Activated CD8-positive, alpha-beta T cell treated with anti-CD3 and anti-CD28 coated beads for 36 hours (primary cell): ENCODE measurements at regions of chr15 and their contacts with region 1.

Region 1: DNA sequence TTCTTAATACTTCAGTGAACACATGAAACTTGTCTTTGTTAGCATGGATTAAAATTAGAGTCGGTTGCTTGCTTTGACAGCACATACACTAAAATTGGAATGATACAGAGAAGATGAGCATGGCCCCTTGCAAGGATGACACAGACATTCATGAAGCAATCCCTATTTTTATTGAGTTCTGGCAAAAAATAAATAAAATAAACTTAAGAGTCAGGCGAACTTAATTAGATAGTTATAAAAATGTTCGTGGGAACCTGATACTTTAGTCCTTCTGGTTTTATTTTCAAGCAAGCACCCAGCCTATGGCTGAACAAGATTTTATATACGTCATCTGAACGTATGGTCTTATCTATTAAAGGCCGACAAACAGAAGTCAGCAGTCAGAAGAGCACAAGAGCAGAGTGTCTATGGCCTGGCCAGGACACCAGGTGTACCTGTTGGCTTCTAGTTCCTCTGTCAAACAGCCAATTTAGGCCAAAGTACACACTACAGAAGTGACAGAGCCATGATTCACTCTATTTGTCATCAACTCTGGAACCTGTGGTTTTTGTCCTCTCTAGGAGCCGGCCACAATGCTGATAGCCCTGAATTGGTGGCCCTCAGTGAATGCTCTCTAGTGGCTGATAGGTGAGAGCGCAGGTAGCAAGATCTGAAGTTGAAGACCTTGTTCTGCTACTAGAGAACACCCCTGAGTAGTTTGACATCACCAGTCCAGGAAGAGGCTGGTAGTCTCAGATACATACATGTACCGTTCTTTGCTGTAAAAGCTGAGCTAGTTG is 64.3 kb downstream of the LEO1 start:
- DNase-seq: peak; percentile 14
- ATAC-seq: peak; percentile 60
- H3K4me3 Mint-ChIP-seq: no peak overlapping the region
- H3K27ac Mint-ChIP-seq: no peak overlapping the region
- H3K4me1 Mint-ChIP-seq: no peaks in the 10 kb centered on the region
- H3K27me3 Mint-ChIP-seq: no peaks in the 10 kb centered on the region
- CTCF ChIP-seq: no peak

Region 2: GRCh38 chr15:51888593-51889195 is 18.6 kb before region 1 on chr15:
- CTCF ChIA-PET with region 1: interaction called, 34 read pairs
- POLR2A ChIA-PET with region 1: no interaction called
- intact Hi-C with region 1: no loop called
- DNase-seq: no peak
- ATAC-seq: no peak
- H3K4me3 Mint-ChIP-seq: no peak overlapping the region
- H3K27ac Mint-ChIP-seq: no peak overlapping the region
- H3K4me1 Mint-ChIP-seq: peaks cover 10% of the 10 kb centered on the region
- H3K27me3 Mint-ChIP-seq: no peaks in the 10 kb centered on the region
- CTCF ChIP-seq: peak; percentile 92

Region 3: DNA sequence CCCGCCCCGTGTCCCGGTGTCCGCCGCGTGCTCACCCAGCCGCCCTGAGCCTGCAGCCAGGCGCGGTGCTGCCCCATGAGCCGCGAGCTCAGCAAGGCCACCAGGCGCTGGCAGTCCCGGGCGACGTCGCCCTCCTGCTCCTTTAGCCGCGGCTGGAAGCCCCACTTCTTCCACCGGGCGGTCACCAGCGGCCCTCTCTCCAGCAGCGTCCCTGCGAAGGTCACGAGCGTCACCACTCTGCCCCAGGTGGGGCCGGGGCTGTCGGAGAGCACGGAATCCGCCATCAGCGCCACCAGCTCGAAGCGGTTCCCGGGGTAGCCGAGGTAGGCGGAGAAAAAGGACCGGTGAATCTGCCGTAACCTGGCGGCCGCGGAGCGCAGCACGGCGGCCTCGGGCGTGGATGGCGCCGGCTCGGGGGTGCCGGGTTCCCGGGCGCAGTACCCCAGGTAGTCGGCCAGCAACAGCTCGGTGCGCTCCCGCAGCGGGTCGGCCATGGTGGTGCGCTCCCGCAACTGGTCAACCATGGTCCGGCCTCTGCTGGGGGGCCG is 205.0 kb after region 1 on chr15:
- CTCF ChIA-PET with region 1: no interaction called
- POLR2A ChIA-PET with region 1: no interaction called
- intact Hi-C with region 1: no loop called
- DNase-seq: peak; percentile 54
- ATAC-seq: peak; percentile 87
- H3K4me3 Mint-ChIP-seq: peak overlapping the region; percentile 64
- H3K27ac Mint-ChIP-seq: no peak overlapping the region
- H3K4me1 Mint-ChIP-seq: peaks cover 7% of the 10 kb centered on the region
- H3K27me3 Mint-ChIP-seq: peaks cover 29% of the 10 kb centered on the region
- CTCF ChIP-seq: peak; percentile 13